ENCODE measurements at regions of chr6 and their contacts with region 1.

Region 1: DNA sequence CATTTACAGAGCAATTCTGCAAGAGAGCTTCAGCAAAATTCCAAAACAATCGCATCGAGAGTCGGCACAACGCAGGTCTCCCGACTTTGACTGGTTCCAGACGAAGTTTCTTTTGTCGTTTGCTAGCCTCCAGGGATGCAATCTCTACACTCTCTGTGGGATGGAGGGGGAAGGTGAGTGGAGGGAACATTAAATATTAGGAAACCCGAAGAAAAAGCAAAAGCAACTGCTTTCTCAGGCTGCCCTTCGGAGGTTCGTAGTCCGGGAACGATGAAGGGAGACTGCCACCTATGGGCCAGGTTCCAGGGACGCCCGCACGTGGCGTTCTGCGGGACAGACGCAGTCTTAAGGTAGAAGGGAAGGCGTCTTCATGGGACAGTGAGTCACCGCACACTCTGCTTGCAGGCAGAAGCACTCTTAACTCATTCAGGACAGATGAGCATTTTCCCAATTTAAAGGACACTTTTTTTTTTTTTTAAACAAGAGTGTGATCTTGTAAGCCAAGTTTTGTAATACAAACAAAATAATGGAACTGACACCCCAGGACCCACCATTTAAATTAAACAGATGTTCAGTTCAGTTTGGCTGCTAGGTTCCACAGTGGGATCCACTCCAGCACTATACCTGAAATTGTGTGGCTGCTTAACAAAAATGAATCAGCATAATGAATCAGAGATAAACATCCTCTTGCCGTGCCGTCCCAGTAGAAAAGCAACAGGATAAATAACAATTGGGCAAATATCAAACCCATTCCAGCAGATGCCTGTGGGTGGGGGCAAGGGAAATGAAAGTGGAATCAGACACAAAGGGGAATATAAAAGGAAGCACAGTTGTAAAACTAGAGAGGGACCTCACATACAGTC is 65.8 kb upstream of the ARMC2 start:
- DNase-seq: peak; percentile 78 to 96 (median 84)
- H3K4me3 ChIP-seq: peak overlapping the region; percentile 29 to 73 (median 34)
- H3K4me3 Mint-ChIP-seq: peak overlapping the region; percentile 84 to 96
- H3K27ac ChIP-seq: peak overlapping the region in 1 of 2 donors; percentile 6
- H3K27ac Mint-ChIP-seq: peak overlapping the region in 6 of 7 donors; percentile 13 to 80 (median 67)
- H3K4me1 ChIP-seq: peaks cover 24 to 28% of the 10 kb centered on the region in 2 donors
- H3K4me1 Mint-ChIP-seq: peaks cover 29% of the 10 kb centered on the region
- H3K27me3 ChIP-seq: peaks cover 0 to 2% of the 10 kb centered on the region in 2 donors
- H3K27me3 Mint-ChIP-seq: peaks cover 8 to 19% (median 11%) of the 10 kb centered on the region in 3 donors
- CTCF ChIP-seq: peak; percentile 80

Region 2: GRCh38 chr6:108655806-108656651 is 126.4 kb before region 1 on chr6:
- intact Hi-C with region 1: loop called in 1 of 2 experiments (anchors 10 kb)
- DNase-seq: no peak
- H3K4me3 ChIP-seq: no peak overlapping the region
- H3K4me3 Mint-ChIP-seq: no peak overlapping the region
- H3K27ac ChIP-seq: no peak overlapping the region
- H3K27ac Mint-ChIP-seq: no peak overlapping the region
- H3K4me1 ChIP-seq: peaks cover 30 to 34% of the 10 kb centered on the region in 2 donors
- H3K4me1 Mint-ChIP-seq: peaks cover 36% of the 10 kb centered on the region
- H3K27me3 ChIP-seq: no peaks in the 10 kb centered on the region
- H3K27me3 Mint-ChIP-seq: no peaks in the 10 kb centered on the region
- CTCF ChIP-seq: no peak

Region 3: DNA sequence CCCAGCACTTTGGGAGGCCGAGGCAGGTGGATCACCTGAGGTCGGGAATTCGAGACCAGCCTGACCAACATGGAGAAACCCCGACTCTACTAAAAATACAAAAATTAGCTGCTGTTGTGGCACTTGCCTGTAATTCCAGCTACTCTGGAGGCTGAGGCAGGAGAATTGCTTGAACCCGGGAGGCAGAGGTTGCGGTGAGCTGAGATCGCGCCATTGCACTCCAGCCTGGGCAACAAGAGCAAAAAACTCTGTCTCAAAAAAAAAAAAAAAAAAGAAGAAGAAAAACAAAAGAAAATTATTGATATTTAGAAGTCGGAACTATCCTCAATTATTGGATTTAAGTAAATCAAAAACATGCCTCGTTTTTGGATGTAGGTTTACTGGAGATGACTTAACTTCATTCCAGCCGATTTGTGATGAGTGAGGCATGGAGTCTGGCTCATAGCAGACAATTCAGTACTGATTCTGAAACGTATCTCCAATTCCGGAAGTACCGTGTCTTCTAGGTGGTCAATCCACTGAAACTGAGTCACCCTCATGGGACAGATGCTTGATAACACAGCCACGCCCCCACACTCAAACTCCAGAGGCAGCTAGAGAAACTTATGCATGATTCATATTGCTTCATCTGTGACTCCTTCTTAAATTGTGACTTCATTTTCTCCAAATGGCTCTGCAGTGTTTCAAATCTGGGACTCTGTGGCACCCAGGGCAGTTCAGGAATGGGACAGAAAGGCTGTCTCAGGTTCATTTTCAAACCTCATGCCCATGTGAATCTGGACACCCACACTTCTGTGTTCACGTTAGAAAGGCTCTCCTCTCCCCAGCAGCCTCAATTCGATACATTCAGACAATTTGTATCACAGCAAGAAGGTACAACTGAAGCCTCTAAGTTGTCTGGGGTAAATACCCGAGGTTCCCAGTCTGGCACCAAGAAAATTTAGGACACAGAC is 44.5 kb before region 1 on chr6:
- intact Hi-C with region 1: loop called in 1 of 2 experiments (anchors 5 kb)
- DNase-seq: peak; percentile 21 to 85 (median 36)
- H3K4me3 ChIP-seq: no peak overlapping the region
- H3K4me3 Mint-ChIP-seq: no peak overlapping the region
- H3K27ac ChIP-seq: no peak overlapping the region
- H3K27ac Mint-ChIP-seq: peak overlapping the region in 2 of 7 donors; percentile 10 to 41
- H3K4me1 ChIP-seq: peaks cover 23 to 40% of the 10 kb centered on the region in 2 donors
- H3K4me1 Mint-ChIP-seq: peaks cover 33% of the 10 kb centered on the region
- H3K27me3 ChIP-seq: no peaks in the 10 kb centered on the region
- H3K27me3 Mint-ChIP-seq: peaks cover 1 to 4% (median 3%) of the 10 kb centered on the region in 3 donors
- CTCF ChIP-seq: no peak

Region 4: GRCh38 chr6:108835218-108835850 is 52.9 kb after region 1 on chr6:
- intact Hi-C with region 1: loop called in 1 of 2 experiments (anchors 5 kb)
- DNase-seq: peak; percentile 81 to 85 (median 83)
- H3K4me3 ChIP-seq: no peak overlapping the region
- H3K4me3 Mint-ChIP-seq: peak overlapping the region in 1 of 2 donors; percentile 89
- H3K27ac ChIP-seq: no peak overlapping the region
- H3K27ac Mint-ChIP-seq: peak overlapping the region in 3 of 7 donors; percentile 58 to 65 (median 62)
- H3K4me1 ChIP-seq: peaks cover 23 to 31% of the 10 kb centered on the region in 2 donors
- H3K4me1 Mint-ChIP-seq: peaks cover 39% of the 10 kb centered on the region
- H3K27me3 ChIP-seq: peaks cover 0 to 18% of the 10 kb centered on the region in 2 donors
- H3K27me3 Mint-ChIP-seq: peaks cover 23 to 34% (median 26%) of the 10 kb centered on the region in 3 donors
- CTCF ChIP-seq: peak; percentile 94

Measured in CD14-positive monocyte (primary cell).